Activated naive CD4-positive, alpha-beta T cell treated with anti-CD3 and anti-CD28 coated beads for 36 hours (primary cell): ENCODE measurements at regions of chr17 and their contacts with region 1.

Region 1: GRCh38 chr17:59619293-59620063 is at the start of gene CLTC:
- DNase-seq: peak; percentile 94
- H3K4me3 Mint-ChIP-seq: peak within 1 kb of the TSS; percentile 93
- H3K27ac Mint-ChIP-seq: peak within 1 kb of the TSS; percentile 96
- H3K4me1 Mint-ChIP-seq: peaks cover 49% of the 10 kb centered on the region
- H3K27me3 Mint-ChIP-seq: no peaks in the 10 kb centered on the region
- total RNA-seq, gene CLTC: 127 to 134 TPM

Region 2: GRCh38 chr17:59106463-59107305 is 512.8 kb before region 1 on chr17 and contains the start of gene TRIM37:
- CTCF ChIA-PET with region 1: no interaction called
- intact Hi-C with region 1: loop called (anchors 1 kb)
- DNase-seq: peak; percentile 99
- H3K4me3 Mint-ChIP-seq: peak within 1 kb of the TSS; percentile 96
- H3K27ac Mint-ChIP-seq: peak within 1 kb of the TSS; percentile 89
- H3K4me1 Mint-ChIP-seq: peaks cover 54% of the 10 kb centered on the region
- H3K27me3 Mint-ChIP-seq: no peaks in the 10 kb centered on the region
- total RNA-seq, gene TRIM37: 19.9 to 24.1 TPM

Region 3: GRCh38 chr17:59490216-59490615 is 129.3 kb before region 1 on chr17:
- CTCF ChIA-PET with region 1: no interaction called
- intact Hi-C with region 1: no loop called
- DNase-seq: no peak
- H3K4me3 Mint-ChIP-seq: no peak overlapping the region
- H3K27ac Mint-ChIP-seq: no peak overlapping the region
- H3K4me1 Mint-ChIP-seq: no peaks in the 10 kb centered on the region
- H3K27me3 Mint-ChIP-seq: no peaks in the 10 kb centered on the region

Region 4: GRCh38 chr17:59565171-59565969 is 54.1 kb before region 1 on chr17 and contains the start of gene DHX40:
- CTCF ChIA-PET with region 1: no interaction called
- intact Hi-C with region 1: loop called (anchors 1 kb)
- DNase-seq: peak; percentile 98
- H3K4me3 Mint-ChIP-seq: peak within 1 kb of the TSS; percentile 100
- H3K27ac Mint-ChIP-seq: peak within 1 kb of the TSS; percentile 98
- H3K4me1 Mint-ChIP-seq: peaks cover 21% of the 10 kb centered on the region
- H3K27me3 Mint-ChIP-seq: no peaks in the 10 kb centered on the region
- total RNA-seq, gene DHX40: 14.2 to 15.3 TPM

Region 5: DNA sequence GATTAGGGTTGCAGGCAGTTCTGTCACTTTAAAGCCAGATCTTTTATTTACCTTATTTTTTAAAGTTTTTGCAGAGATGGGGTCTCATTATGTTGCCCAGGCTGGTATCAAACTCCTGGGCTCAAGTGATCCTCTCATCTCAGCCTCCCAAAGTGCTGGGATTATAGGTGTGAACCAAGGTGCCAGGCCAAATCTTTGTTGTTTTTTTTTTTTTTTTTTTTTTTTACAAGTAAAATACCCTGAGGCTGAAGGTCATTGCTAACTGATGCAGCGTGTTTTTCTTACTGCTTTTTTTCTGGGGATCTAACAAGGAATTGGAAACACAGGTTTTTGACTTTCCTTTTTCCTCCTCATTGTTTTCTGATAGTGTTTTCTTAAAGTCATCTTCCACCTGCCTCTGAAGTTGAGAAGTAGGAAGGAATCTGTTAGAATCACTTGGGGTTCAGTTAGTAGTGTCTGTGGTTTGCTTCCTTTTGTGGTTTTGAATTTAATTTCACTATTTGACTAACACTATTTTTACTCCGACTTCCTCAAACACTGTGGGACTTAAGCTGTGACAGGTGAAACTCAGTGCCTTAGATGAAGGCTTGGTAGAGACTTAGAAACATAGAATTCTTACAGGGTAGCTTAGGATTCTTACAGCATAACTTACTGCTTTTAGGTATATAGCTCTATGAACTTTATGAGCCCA is 22.5 kb after region 1 on chr17:
- CTCF ChIA-PET with region 1: no interaction called
- intact Hi-C with region 1: loop called (anchors 1 kb)
- DNase-seq: no peak
- H3K4me3 Mint-ChIP-seq: peak overlapping the region; percentile 2
- H3K27ac Mint-ChIP-seq: peak overlapping the region; percentile 7
- H3K4me1 Mint-ChIP-seq: peaks cover 47% of the 10 kb centered on the region
- H3K27me3 Mint-ChIP-seq: no peaks in the 10 kb centered on the region

Region 6: DNA sequence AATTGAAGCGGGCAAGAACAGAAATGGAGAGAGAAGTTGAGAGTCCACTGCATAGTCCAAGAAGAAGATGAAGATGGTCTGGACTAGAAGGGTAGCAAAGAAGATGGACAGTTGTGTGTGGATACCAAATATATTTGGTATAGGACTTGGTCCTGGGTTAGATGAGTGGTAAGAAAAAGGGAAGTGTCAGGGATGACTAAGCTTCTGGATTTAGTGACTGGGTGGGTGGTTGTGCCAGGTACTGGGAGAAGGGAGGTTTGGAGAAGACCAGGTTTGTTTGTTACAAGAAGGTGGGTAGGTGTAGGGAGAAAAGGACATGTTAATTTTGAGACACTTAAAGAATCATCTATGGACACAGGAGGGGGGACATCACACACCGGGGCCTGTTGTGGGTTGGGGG is 93.4 kb after region 1 on chr17:
- CTCF ChIA-PET with region 1: no interaction called
- intact Hi-C with region 1: no loop called
- DNase-seq: no peak
- H3K4me3 Mint-ChIP-seq: no peak overlapping the region
- H3K27ac Mint-ChIP-seq: no peak overlapping the region
- H3K4me1 Mint-ChIP-seq: peaks cover 49% of the 10 kb centered on the region
- H3K27me3 Mint-ChIP-seq: no peaks in the 10 kb centered on the region

Region 7: GRCh38 chr17:59725691-59726090 is 106.2 kb after region 1 on chr17:
- CTCF ChIA-PET with region 1: no interaction called
- intact Hi-C with region 1: no loop called
- DNase-seq: no peak
- H3K4me3 Mint-ChIP-seq: no peak overlapping the region
- H3K27ac Mint-ChIP-seq: no peak overlapping the region
- H3K4me1 Mint-ChIP-seq: peaks cover 15% of the 10 kb centered on the region
- H3K27me3 Mint-ChIP-seq: no peaks in the 10 kb centered on the region

Region 8: GRCh38 chr17:59786536-59787319 is 167.2 kb after region 1 on chr17:
- CTCF ChIA-PET with region 1: no interaction called
- intact Hi-C with region 1: loop called (anchors 1 kb)
- DNase-seq: peak; percentile 93
- H3K4me3 Mint-ChIP-seq: peak overlapping the region; percentile 64
- H3K27ac Mint-ChIP-seq: peak overlapping the region; percentile 100
- H3K4me1 Mint-ChIP-seq: peaks cover 60% of the 10 kb centered on the region
- H3K27me3 Mint-ChIP-seq: no peaks in the 10 kb centered on the region

Region 9: DNA sequence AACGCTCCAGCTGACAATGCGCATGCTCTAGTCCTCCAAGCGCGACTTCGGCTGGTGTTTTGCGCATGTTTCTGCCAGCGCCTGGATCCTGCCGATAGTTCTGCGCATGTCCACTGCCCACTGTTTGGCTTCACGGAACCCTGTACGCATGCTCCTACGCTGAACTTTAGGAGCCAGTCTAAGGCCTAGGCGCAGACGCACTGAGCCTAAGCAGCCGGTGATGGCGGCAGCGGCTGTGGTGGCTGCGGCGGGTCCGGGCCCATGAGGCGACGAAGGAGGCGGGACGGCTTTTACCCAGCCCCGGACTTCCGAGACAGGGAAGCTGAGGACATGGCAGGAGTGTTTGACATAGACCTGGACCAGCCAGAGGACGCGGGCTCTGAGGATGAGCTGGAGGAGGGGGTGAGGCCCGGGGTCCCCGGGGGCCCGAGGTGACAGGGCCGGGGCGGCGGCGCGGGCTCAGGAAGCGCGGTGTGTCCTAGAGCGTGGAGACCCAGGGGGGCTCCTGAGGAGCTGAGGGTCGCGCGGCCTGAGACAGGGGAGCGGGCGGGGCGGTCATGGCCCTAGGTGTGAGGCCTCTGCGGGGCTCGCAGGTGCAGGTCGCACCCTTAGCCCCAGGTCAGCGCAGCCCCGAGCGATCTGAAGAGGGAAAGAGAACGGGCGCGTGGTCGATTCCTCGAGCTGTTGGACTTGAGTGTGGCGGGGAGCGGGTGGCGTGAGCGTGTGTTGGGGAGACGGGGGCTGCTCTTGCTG is 273.6 kb after region 1 on chr17 and contains the starts of genes RPS6KB1 and TUBD1:
- CTCF ChIA-PET with region 1: no interaction called
- intact Hi-C with region 1: loop called (anchors 1 kb)
- DNase-seq: peak; percentile 99
- H3K4me3 Mint-ChIP-seq: peak within 1 kb of the TSS; percentile 100
- H3K27ac Mint-ChIP-seq: peak within 1 kb of the TSS; percentile 96
- H3K4me1 Mint-ChIP-seq: peaks cover 58% of the 10 kb centered on the region
- H3K27me3 Mint-ChIP-seq: no peaks in the 10 kb centered on the region
- total RNA-seq, gene RPS6KB1: 42.1 to 48.5 TPM
- total RNA-seq, gene TUBD1: 15.2 to 15.4 TPM

Region 10: GRCh38 chr17:60067854-60068253 is 448.4 kb after region 1 on chr17:
- CTCF ChIA-PET with region 1: no interaction called
- intact Hi-C with region 1: no loop called
- DNase-seq: no peak
- H3K4me3 Mint-ChIP-seq: no peak overlapping the region
- H3K27ac Mint-ChIP-seq: no peak overlapping the region
- H3K4me1 Mint-ChIP-seq: no peaks in the 10 kb centered on the region
- H3K27me3 Mint-ChIP-seq: no peaks in the 10 kb centered on the region

Region 11: DNA sequence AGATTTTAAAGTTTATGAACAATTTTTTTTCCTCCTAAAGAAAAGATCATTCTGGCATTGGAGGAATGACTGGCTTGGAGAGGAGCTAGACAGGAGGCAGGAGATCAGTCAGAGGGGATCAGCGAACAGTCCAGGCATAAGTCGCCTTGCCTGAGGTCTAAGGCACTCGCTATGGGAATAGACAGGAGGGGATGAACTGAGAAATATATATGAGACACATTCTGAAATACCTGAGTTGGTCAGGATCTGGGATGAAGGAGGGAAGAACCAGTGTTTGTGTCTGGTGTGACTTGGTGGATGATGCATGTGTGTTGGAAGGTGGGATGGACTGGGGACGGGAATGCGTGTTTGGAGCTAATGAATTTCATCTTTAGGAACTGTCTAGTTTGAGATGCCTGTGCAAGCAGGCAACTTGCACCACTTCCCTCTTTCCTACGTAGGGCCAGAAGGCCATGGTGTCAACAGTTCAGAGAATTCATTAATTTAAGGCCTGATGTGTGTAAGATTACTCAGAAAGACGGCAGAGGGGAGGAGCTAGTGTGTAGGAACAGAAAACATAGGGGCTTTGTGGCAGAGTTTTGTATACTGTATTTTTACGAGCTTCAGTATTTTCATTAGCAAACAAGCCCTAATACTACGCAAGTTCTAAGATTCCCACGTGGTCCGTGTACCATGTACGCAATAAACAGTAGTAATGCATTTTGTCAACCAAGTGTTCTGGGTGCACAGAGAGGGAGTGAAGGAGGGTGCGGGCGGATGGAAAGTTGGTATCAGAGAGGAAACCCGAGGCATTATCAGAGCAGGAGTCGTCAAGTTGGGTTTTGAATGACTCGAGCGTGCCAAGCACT is 458.4 kb after region 1 on chr17:
- CTCF ChIA-PET with region 1: no interaction called
- intact Hi-C with region 1: loop called (anchors 5 kb)
- DNase-seq: peak; percentile 49
- H3K4me3 Mint-ChIP-seq: peak overlapping the region; percentile 85
- H3K27ac Mint-ChIP-seq: peak overlapping the region; percentile 82
- H3K4me1 Mint-ChIP-seq: peaks cover 20% of the 10 kb centered on the region
- H3K27me3 Mint-ChIP-seq: peaks cover 2% of the 10 kb centered on the region